Naive thymus-derived CD8-positive, alpha-beta T cell (primary cell): ENCODE measurements at regions of chr6 and their contacts with region 1.

Region 1: DNA sequence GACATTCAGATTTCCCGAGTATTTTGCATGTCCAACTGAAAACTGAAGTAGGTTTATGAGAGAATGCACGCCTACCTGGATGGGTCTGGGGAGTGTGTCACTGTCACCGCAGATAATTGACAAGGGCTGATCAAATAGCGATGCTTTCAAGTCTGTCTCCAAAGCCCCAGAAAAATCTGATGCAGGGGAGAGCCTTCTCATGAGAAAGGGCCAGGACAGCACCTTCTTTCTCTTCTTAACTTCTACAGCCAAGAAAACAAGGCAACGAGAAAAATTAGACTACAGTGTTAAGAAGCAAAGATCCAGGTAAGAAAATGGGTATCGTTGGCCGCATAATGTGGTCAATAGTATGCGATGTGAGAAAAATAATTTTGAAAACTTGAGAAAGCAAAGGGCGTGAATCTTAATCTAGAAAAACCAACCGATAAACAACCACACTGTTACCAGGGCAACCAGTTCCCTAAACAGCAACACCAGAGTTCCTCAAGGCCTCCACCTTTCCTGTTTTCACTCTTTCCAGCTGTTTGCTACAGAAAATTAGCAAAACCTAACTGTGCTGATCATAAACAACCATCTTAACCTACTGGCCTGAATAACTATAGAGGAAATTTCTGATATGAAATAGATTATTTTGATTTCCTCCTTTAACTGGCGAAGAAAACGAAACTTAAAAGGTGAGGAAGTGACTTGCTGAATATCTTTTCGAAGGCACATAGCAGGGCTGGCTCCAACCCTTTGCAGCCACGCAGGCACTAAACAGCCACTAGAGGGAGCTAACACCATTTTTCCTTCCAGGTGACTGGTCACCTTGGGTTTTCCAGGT is 2.6 kb downstream of the TAGAP start:
- DNase-seq: peak; percentile 36 to 91 (median 79)
- ATAC-seq: peak; percentile 45 to 61
- H3K4me3 Mint-ChIP-seq: peak overlapping the region; percentile 92 to 100 (median 98)
- H3K27ac Mint-ChIP-seq: peak overlapping the region; percentile 90 to 100 (median 98)
- H3K4me1 Mint-ChIP-seq: peaks cover 29 to 69% (median 69%) of the 10 kb centered on the region in 4 donors
- H3K27me3 Mint-ChIP-seq: no peaks in the 10 kb centered on the region

Region 2: DNA sequence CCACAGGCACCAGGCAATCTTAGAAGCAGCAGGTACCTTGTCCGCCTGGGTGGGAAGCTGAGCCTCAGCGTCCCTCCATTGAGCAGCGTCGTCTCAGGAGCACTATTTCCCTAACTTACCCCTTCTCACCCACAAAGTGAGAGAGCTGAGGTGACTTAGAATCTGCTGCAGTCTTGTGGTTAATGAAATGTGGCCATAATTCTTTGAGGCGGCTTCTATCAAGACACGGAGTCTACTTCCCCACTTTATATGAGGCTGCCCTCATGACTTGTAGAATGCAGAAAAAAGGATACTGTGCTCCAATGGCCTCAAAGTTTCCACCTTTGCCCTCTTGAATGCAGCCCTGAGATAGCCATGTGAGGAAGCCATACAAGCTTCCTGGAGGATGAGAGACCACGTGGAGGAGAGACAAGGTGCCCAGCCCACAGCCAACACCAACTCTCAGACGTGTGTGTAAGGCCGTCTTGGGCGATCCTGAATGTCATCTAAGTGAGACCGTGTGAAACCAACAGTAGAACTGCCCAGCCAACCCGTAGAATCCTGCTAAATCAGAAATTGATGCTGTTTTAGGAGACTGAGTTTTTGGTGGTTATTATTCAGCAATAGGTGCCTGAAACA is 11.7 kb after region 1 on chr6:
- POLR2A ChIA-PET with region 1: interaction called, 135 read pairs
- DNase-seq: no peak
- ATAC-seq: peak; percentile 29 to 41
- H3K4me3 Mint-ChIP-seq: peak overlapping the region in 3 of 10 donors; percentile 3 to 65 (median 28)
- H3K27ac Mint-ChIP-seq: peak overlapping the region in 7 of 10 donors; percentile 15 to 79 (median 52)
- H3K4me1 Mint-ChIP-seq: peaks cover 18 to 68% (median 44%) of the 10 kb centered on the region in 4 donors
- H3K27me3 Mint-ChIP-seq: no peaks in the 10 kb centered on the region

Region 3: GRCh38 chr6:159062564-159062945 is 20.3 kb after region 1 on chr6:
- POLR2A ChIA-PET with region 1: interaction called, 135 read pairs
- DNase-seq: peak in 9 of 10 donors; percentile 51 to 89 (median 80)
- ATAC-seq: peak; percentile 93 to 94
- H3K4me3 Mint-ChIP-seq: peak overlapping the region; percentile 56 to 84 (median 75)
- H3K27ac Mint-ChIP-seq: peak overlapping the region; percentile 96 to 99 (median 97)
- H3K4me1 Mint-ChIP-seq: peaks cover 43 to 96% (median 85%) of the 10 kb centered on the region in 4 donors
- H3K27me3 Mint-ChIP-seq: no peaks in the 10 kb centered on the region

Region 4: GRCh38 chr6:159080217-159080976 is 38.2 kb after region 1 on chr6:
- POLR2A ChIA-PET with region 1: interaction called, 18 read pairs
- DNase-seq: peak in 1 of 10 donors; percentile 26
- ATAC-seq: peak; percentile 56 to 77
- H3K4me3 Mint-ChIP-seq: peak overlapping the region in 9 of 10 donors; percentile 4 to 66 (median 62)
- H3K27ac Mint-ChIP-seq: peak overlapping the region in 8 of 10 donors; percentile 7 to 86 (median 79)
- H3K4me1 Mint-ChIP-seq: peaks cover 32 to 69% (median 50%) of the 10 kb centered on the region in 4 donors
- H3K27me3 Mint-ChIP-seq: no peaks in the 10 kb centered on the region

Region 5: GRCh38 chr6:159098636-159099106 is 56.5 kb after region 1 on chr6:
- POLR2A ChIA-PET with region 1: interaction called, 183 read pairs
- DNase-seq: peak; percentile 50 to 87 (median 73)
- ATAC-seq: peak; percentile 78 to 79
- H3K4me3 Mint-ChIP-seq: peak overlapping the region; percentile 67 to 88 (median 80)
- H3K27ac Mint-ChIP-seq: peak overlapping the region; percentile 87 to 97 (median 95)
- H3K4me1 Mint-ChIP-seq: peaks cover 38 to 88% (median 72%) of the 10 kb centered on the region in 4 donors
- H3K27me3 Mint-ChIP-seq: no peaks in the 10 kb centered on the region

Region 6: DNA sequence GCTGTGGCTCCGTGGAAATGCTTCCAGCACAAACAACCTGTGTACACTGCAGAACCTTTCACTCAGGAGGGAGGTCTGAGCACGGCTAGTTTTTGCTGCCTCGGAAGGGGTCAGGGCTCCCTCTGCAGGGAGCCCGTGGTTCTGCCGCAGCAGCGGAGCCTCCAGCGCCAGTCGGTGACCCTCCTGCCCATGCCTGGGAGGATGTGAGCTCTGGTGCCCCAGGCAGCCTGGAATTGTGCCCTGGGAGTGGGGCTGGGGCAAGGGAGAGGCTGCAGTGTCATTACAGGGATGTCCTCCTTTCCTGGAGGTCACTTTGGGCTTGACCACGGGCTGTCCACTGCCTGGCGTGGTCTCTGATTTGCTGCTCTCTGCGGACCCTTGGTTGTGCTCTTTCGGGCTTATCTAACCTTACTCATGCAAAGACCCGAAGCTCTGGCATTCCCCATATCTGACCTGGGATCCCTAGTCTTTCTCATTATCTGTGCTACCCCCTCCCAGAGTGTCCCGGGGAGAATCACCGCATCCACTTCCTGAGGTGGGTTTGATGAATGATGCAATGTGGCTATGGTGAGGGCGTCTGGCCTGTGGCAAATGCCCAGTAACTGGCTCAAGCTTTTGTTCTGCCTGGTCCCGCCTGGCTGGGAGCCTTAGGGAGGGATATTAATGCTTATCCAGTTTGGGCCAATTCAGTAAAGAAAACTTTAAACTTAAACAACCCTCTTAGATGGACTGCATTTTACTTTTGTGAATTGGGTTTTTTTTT is 62.1 kb after region 1 on chr6:
- POLR2A ChIA-PET with region 1: interaction called, 183 read pairs
- DNase-seq: peak; percentile 62 to 88 (median 74)
- ATAC-seq: peak; percentile 41 to 51
- H3K4me3 Mint-ChIP-seq: peak overlapping the region; percentile 34 to 76 (median 52)
- H3K27ac Mint-ChIP-seq: peak overlapping the region; percentile 86 to 95 (median 90)
- H3K4me1 Mint-ChIP-seq: peaks cover 44 to 92% (median 78%) of the 10 kb centered on the region in 4 donors
- H3K27me3 Mint-ChIP-seq: no peaks in the 10 kb centered on the region

Region 7: DNA sequence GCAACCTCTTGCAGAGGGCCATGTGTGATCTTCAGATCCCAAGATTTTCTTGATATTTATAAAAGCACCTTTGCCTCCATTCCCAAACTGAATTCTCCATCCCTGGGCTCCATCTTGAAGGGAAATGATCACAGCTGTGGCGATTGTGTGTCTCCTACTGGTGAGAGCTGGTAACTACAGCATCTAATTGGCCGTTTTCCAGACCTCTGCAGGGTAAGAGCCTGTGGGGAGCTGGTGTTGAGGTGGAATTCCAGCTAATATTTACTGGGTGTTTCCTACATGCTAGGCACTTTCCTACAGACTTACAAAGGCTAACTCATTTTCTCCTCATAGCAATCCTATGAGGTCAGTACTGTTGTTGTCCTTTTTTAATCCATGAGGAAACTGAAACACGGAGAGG is 67.8 kb after region 1 on chr6:
- POLR2A ChIA-PET with region 1: interaction called, 183 read pairs
- DNase-seq: peak in 8 of 10 donors; percentile 21 to 65 (median 46)
- ATAC-seq: no peak
- H3K4me3 Mint-ChIP-seq: peak overlapping the region in 3 of 10 donors; percentile 17 to 60 (median 49)
- H3K27ac Mint-ChIP-seq: peak overlapping the region in 8 of 10 donors; percentile 39 to 87 (median 74)
- H3K4me1 Mint-ChIP-seq: peaks cover 32 to 84% (median 54%) of the 10 kb centered on the region in 4 donors
- H3K27me3 Mint-ChIP-seq: no peaks in the 10 kb centered on the region